Heart right ventricle (tissue), 16 donors: ENCODE measurements at regions of chr6 and their contacts with region 1.

Region 1: DNA sequence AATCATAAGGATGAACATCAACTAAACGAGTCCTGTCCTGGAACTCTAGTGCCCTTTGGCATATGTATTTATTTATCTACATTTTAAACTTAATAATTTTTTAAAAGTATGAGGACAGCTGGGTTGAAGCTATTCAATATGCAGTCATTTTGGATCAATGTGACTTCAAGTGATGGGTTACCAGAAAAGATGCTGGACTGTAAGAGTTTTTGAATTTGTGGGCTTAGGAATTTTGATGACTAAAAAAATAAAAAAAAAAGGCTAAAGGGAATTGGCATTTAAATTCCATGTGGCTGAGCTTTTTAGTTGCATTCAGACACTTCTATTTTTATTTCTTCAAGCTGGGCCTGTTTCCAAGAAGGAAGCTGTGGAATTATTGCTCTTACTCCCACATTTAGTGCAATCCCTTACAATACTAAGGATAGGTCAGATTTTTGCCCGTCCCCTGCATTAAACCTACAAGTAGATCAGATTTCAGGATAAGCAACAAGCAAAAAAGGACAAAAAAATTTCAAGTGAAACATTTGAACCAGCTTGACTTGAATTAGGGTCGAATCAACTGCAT is 704.2 kb upstream of the CITED2 start:
- DNase-seq: peak in 1 of 2 donors; percentile 51
- ATAC-seq: peak; percentile 45 to 83 (median 60)
- H3K4me3 ChIP-seq: peak overlapping the region in 2 of 10 donors; percentile 3 to 12
- H3K27ac ChIP-seq: peak overlapping the region; percentile 71 to 89 (median 82)
- H3K4me1 ChIP-seq: peaks cover 0 to 36% (median 22%) of the 10 kb centered on the region in 9 donors
- H3K27me3 ChIP-seq: no peaks in the 10 kb centered on the region
- CTCF ChIP-seq: no peak

Region 2: GRCh38 chr6:139764498-139764986 is 314.1 kb before region 1 on chr6:
- intact Hi-C with region 1: loop called in 3 of 10 experiments (anchors 10 kb)
- DNase-seq: peak in 1 of 2 donors; percentile 48
- ATAC-seq: peak; percentile 90 to 99 (median 96)
- H3K4me3 ChIP-seq: no peak overlapping the region
- H3K27ac ChIP-seq: peak overlapping the region; percentile 33 to 83 (median 78)
- H3K4me1 ChIP-seq: peaks cover 11 to 43% (median 30%) of the 10 kb centered on the region in 9 donors
- H3K27me3 ChIP-seq: no peaks in the 10 kb centered on the region
- CTCF ChIP-seq: no peak

Region 3: DNA sequence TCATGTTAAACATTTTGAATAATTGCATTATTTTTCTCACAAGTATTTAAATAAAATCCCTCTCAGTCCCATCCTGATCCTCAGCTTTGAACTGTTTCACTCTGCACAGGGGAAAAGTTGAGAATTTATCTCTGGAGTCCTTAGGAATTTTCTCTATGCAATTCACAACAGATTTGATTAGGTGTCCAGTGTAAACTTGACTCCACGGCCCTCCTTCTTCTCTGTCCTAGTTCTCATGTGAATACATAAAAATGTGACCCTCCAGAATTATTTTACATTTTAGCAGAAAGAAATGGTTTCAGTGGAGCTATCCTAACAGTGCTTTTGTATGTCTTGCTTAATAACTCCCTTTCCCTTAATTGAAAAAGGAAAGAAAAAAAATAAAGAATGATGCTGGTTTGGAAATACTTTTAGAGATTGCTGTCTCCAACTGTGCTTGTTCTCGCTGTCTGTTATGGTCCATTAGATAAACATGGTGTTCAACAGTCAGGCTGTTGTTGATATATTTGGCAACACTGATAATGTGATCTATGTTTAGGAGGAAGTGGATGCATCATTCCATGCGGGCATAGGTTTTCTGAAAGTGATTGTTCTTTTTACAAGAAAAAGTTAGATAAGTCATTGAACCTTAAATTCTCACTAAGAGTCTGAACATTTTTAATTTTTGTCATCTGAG is 104.8 kb before region 1 on chr6:
- intact Hi-C with region 1: loop called in 4 of 10 experiments (anchors 5 to 10 kb)
- DNase-seq: no peak
- ATAC-seq: peak in 7 of 8 donors; percentile 76 to 95 (median 88)
- H3K4me3 ChIP-seq: peak overlapping the region in 1 of 10 donors; percentile 0
- H3K27ac ChIP-seq: peak overlapping the region; percentile 11 to 85 (median 65)
- H3K4me1 ChIP-seq: peaks cover 0 to 31% (median 20%) of the 10 kb centered on the region in 9 donors
- H3K27me3 ChIP-seq: no peaks in the 10 kb centered on the region
- CTCF ChIP-seq: no peak

Region 4: GRCh38 chr6:140160494-140160893 is 81.9 kb after region 1 on chr6:
- intact Hi-C with region 1: no loop called
- DNase-seq: no peak
- ATAC-seq: no peak
- H3K4me3 ChIP-seq: no peak overlapping the region
- H3K27ac ChIP-seq: no peak overlapping the region
- H3K4me1 ChIP-seq: no peaks in the 10 kb centered on the region
- H3K27me3 ChIP-seq: no peaks in the 10 kb centered on the region
- CTCF ChIP-seq: no peak

Region 5: GRCh38 chr6:140203661-140204147 is 125.1 kb after region 1 on chr6:
- intact Hi-C with region 1: loop called in 1 of 10 experiments (anchors 5 kb)
- DNase-seq: no peak
- ATAC-seq: peak in 2 of 8 donors; percentile 54 to 57
- H3K4me3 ChIP-seq: no peak overlapping the region
- H3K27ac ChIP-seq: peak overlapping the region in 5 of 10 donors; percentile 15 to 57 (median 33)
- H3K4me1 ChIP-seq: peaks cover 0 to 33% (median 22%) of the 10 kb centered on the region in 9 donors
- H3K27me3 ChIP-seq: no peaks in the 10 kb centered on the region
- CTCF ChIP-seq: no peak

Region 6: GRCh38 chr6:140436013-140436811 is 357.6 kb after region 1 on chr6:
- intact Hi-C with region 1: loop called in 2 of 10 experiments (anchors 2 to 10 kb)
- DNase-seq: no peak
- ATAC-seq: no peak
- H3K4me3 ChIP-seq: no peak overlapping the region
- H3K27ac ChIP-seq: no peak overlapping the region
- H3K4me1 ChIP-seq: peaks cover 0 to 33% (median 10%) of the 10 kb centered on the region in 9 donors
- H3K27me3 ChIP-seq: no peaks in the 10 kb centered on the region
- CTCF ChIP-seq: no peak

Region 7: DNA sequence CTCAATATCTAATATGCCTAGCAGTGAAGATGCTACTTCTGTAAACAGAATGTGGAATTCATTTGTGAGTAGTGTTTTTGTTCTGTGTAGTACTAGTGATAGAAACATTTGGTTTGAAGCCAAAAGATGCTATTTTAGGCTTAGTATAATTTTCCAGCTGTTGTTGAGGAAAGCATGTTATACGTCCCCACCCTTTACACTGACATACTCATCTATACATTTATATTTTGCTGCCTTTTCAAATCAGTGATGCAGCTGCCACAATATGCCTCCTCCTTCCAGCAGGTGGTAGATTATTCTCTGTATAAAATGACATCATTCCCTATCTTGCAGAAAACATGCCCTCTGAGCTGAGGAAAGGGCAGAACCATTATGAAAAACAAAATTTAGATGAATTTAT is 836.5 kb after region 1 on chr6:
- intact Hi-C with region 1: loop called in 1 of 10 experiments (anchors 5 kb)
- DNase-seq: no peak
- ATAC-seq: peak in 3 of 8 donors; percentile 49 to 65 (median 59)
- H3K4me3 ChIP-seq: no peak overlapping the region
- H3K27ac ChIP-seq: peak overlapping the region in 5 of 10 donors; percentile 7 to 46 (median 14)
- H3K4me1 ChIP-seq: peaks cover 2 to 17% (median 12%) of the 10 kb centered on the region in 9 donors
- H3K27me3 ChIP-seq: no peaks in the 10 kb centered on the region
- CTCF ChIP-seq: peak in 3 of 9 donors; percentile 10 to 30 (median 27)